ENCODE measurements at regions of chr12 and their contacts with region 1.

Region 1: DNA sequence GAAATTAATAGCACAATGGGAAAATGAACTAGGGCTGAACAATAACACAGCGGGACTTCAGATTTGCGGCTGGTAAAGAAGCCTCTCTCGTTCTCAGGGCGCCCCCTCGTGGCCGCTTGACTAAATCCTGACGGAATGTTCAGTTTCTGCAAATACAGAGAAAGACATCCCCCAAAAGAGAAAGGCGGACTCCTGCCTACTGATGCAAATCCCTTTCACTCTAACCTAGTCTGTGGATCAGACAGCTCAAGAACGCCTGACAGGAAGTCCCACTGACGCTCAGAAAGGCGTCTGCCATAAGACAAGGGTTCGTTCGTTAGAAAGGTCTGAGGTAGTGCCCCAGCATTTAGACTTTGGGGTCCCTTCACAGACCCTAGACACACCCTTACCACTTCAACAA is 2.5 kb downstream of the NUAK1 start:
- DNase-seq: peak; percentile 90
- H3K4me3 ChIP-seq: peak overlapping the region in 2 of 3 experiments; percentile 72 to 73
- H3K27ac ChIP-seq: peak overlapping the region; percentile 77
- H3K4me1 ChIP-seq: peaks cover 67% of the 10 kb centered on the region
- H3K27me3 ChIP-seq: no peaks in the 10 kb centered on the region
- CTCF ChIP-seq: peak; percentile 75 to 76
- POLR2A ChIP-seq: no peak

Region 2: DNA sequence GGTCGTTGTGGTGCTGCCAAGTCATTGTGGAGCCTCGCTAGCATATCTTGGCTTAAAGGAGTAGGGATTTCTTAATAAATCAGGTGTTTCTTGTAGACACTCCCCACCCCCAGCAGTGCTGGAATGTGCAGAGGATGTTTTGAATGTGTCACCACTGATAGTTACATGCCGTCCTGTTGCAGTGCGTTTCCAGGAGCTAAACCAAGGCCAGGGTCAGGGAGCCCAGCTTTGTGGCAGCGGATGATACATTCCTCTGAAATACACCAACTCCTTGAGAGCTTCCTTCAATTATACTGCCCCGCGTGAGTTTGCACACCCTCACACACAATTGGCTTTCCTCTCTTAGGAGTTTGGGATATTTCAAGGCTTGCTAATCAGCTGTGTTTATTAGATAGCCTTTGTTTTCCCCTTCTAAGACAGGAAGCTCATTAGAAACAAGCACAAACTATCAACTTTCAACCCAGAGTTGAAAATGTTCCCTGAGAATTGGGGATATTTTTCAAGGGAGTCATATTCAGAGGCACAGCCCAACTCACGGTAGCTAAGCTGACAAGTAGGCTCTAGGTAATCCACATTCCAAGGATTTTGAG is 650.8 kb before region 1 on chr12:
- CTCF ChIA-PET with region 1: interaction called, 4 read pairs
- POLR2A ChIA-PET with region 1: interaction called, 3 read pairs
- dilution Hi-C with region 1: no loop called
- intact Hi-C with region 1: loop called (anchors 1 kb)
- DNase-seq: peak; percentile 99
- H3K4me3 ChIP-seq: no peak overlapping the region
- H3K27ac ChIP-seq: peak overlapping the region; percentile 74
- H3K4me1 ChIP-seq: peaks cover 100% of the 10 kb centered on the region
- H3K27me3 ChIP-seq: no peaks in the 10 kb centered on the region
- CTCF ChIP-seq: no peak
- POLR2A ChIP-seq: peak; percentile 90

Region 3: DNA sequence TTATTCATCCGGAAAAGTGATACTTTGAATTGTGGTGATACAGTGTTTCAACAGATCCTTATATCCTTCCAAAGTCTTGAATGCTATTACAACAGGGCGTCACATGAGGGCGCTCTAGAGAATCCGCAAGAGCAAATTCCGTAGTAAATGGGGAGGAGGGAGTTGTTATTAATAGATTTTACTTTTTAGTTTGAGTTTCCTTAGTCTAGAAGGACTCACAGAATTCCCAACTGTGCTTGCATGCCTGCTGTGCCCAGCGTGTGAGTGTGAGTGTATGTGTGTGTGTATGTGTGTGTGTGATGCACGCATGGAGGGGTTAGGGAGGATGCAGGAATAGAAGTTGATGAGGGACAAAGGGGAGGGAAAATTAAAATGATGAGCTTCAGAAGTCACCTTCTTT is 430.5 kb before region 1 on chr12:
- CTCF ChIA-PET with region 1: interaction called, 111 read pairs
- POLR2A ChIA-PET with region 1: no interaction called
- dilution Hi-C with region 1: no loop called
- intact Hi-C with region 1: loop called (anchors 1 kb)
- DNase-seq: peak; percentile 77
- H3K4me3 ChIP-seq: no peak overlapping the region
- H3K27ac ChIP-seq: no peak overlapping the region
- H3K4me1 ChIP-seq: peaks cover 9% of the 10 kb centered on the region
- H3K27me3 ChIP-seq: peaks cover 4 to 7% of the 10 kb centered on the region in 2 experiments
- CTCF ChIP-seq: peak; percentile 63 to 65
- POLR2A ChIP-seq: no peak

Region 4: GRCh38 chr12:105852951-105853350 is 283.3 kb before region 1 on chr12:
- CTCF ChIA-PET with region 1: no interaction called
- POLR2A ChIA-PET with region 1: no interaction called
- dilution Hi-C with region 1: no loop called
- intact Hi-C with region 1: loop called (anchors 5 kb)
- DNase-seq: no peak
- H3K4me3 ChIP-seq: no peak overlapping the region
- H3K27ac ChIP-seq: no peak overlapping the region
- H3K4me1 ChIP-seq: peaks cover 23% of the 10 kb centered on the region
- H3K27me3 ChIP-seq: no peaks in the 10 kb centered on the region
- CTCF ChIP-seq: no peak
- POLR2A ChIP-seq: no peak

Region 5: GRCh38 chr12:106030210-106031175 is 105.8 kb before region 1 on chr12:
- CTCF ChIA-PET with region 1: interaction called, 11 read pairs
- POLR2A ChIA-PET with region 1: no interaction called
- dilution Hi-C with region 1: no loop called
- intact Hi-C with region 1: loop called (anchors 1 kb)
- DNase-seq: peak; percentile 83
- H3K4me3 ChIP-seq: peak overlapping the region in 1 of 3 experiments; percentile 18
- H3K27ac ChIP-seq: peak overlapping the region; percentile 97
- H3K4me1 ChIP-seq: peaks cover 25% of the 10 kb centered on the region
- H3K27me3 ChIP-seq: no peaks in the 10 kb centered on the region
- CTCF ChIP-seq: no peak
- POLR2A ChIP-seq: no peak

Region 6: DNA sequence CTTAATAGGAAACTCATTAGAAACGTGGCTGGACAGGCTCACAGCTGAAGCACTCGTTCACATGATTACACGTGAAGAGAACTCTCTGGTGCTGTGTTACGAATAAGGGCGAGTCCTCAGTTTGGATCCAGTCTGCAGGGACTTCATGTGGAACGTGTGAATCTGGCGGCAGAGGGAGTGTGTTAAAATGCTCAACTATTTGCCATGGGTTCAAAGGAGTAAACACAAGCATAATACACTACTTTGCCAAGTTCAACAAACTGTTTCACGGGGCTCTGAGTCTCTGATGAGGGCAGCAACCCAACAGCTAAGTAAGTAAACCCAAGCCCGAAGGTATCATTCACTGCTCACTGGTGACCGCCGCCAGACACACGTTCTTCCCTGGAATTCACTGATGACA is 39.9 kb before region 1 on chr12:
- CTCF ChIA-PET with region 1: interaction called, 17 read pairs
- POLR2A ChIA-PET with region 1: no interaction called
- dilution Hi-C with region 1: no loop called
- intact Hi-C with region 1: no loop called
- DNase-seq: peak; percentile 85
- H3K4me3 ChIP-seq: no peak overlapping the region
- H3K27ac ChIP-seq: no peak overlapping the region
- H3K4me1 ChIP-seq: peaks cover 20% of the 10 kb centered on the region
- H3K27me3 ChIP-seq: no peaks in the 10 kb centered on the region
- CTCF ChIP-seq: no peak
- POLR2A ChIP-seq: no peak

Region 7: GRCh38 chr12:106223485-106224354 is 87.5 kb after region 1 on chr12:
- CTCF ChIA-PET with region 1: interaction called, 31 read pairs
- POLR2A ChIA-PET with region 1: interaction called, 3 read pairs
- dilution Hi-C with region 1: no loop called
- intact Hi-C with region 1: loop called (anchors 1 kb)
- DNase-seq: peak; percentile 75
- H3K4me3 ChIP-seq: no peak overlapping the region
- H3K27ac ChIP-seq: no peak overlapping the region
- H3K4me1 ChIP-seq: no peaks in the 10 kb centered on the region
- H3K27me3 ChIP-seq: peaks cover 9 to 13% of the 10 kb centered on the region in 2 experiments
- CTCF ChIP-seq: peak; percentile 89 to 93
- POLR2A ChIP-seq: no peak

Measured in endothelial cell of umbilical vein (primary cell).